PC-9 (cell line): ENCODE measurements at regions of chr1 and their contacts with region 1.

Region 1: DNA sequence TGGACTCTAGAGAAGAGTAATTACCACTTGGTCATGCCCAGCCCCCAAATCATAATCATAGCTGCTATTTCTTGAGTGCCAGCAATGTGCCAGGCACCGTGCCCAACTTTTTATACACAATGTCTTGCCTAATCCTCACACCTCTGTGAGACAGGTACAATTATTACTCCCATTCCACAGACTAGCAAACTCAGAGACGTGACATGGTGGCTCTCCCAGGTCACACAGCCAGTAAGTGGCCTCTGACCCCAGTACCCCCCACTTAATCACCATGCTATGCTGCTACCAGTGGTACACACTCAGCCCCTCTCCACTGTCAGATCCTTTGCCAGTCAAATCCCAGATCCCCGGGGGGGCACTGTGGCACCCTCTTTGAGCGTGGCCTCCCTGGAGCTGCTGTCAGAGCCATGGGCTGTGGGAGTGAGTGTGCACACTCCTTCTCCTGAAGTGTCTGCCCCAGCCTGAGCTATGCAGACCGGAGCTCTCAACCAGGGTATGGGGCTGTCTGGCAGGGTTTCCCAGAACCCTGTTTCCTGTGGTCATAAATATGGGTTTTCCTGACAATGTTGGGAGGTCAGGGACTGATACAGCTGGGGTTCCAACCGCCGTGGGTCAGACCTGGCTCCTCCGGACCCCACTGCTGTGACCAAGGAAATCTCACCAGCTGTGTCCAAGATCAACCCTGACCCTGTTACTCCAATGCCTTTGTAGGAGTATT is 51.8 kb downstream of the LACTBL1 start:
- DNase-seq: no peak
- H3K4me3 ChIP-seq: no peak overlapping the region
- H3K27ac ChIP-seq: no peak overlapping the region
- H3K4me1 ChIP-seq: no peaks in the 10 kb centered on the region
- H3K27me3 ChIP-seq: no peaks in the 10 kb centered on the region
- CTCF ChIP-seq: no peak

Region 2: GRCh38 chr1:22654692-22655091 is 266.2 kb before region 1 on chr1:
- CTCF ChIA-PET with region 1: no interaction called
- POLR2A ChIA-PET with region 1: interaction called, 14 read pairs
- intact Hi-C with region 1: no loop called
- DNase-seq: no peak
- H3K4me3 ChIP-seq: no peak overlapping the region
- H3K27ac ChIP-seq: no peak overlapping the region
- H3K4me1 ChIP-seq: no peaks in the 10 kb centered on the region
- H3K27me3 ChIP-seq: peaks cover 37% of the 10 kb centered on the region
- CTCF ChIP-seq: no peak